ENCODE measurements at regions of chr7 and their contacts with region 1.

Region 1: GRCh38 chr7:16982640-16983350 is 101.0 kb upstream of the AGR3 start:
- DNase-seq: peak in 1 of 2 experiments; percentile 60
- ATAC-seq: 0 out of 6 replicates have a peak, but pooled peaks of 1 of the 2 experiments have one; percentile 27
- H3K4me3 ChIP-seq: no peak overlapping the region
- H3K27ac ChIP-seq: peak overlapping the region; percentile 43 to 49
- H3K4me1 ChIP-seq: peaks cover 29% of the 10 kb centered on the region
- CTCF ChIP-seq: peak; percentile 97
- EP300 ChIP-seq: no peak
- POLR2A ChIP-seq: no peak
- RAD21 ChIP-seq: peak; percentile 96

Region 2: GRCh38 chr7:16770662-16771329 is 212.0 kb before region 1 on chr7:
- CTCF ChIA-PET with region 1: no interaction called
- POLR2A ChIA-PET with region 1: no interaction called
- DNase-seq: no peak
- ATAC-seq: no peak
- H3K4me3 ChIP-seq: no peak overlapping the region
- H3K27ac ChIP-seq: no peak overlapping the region
- H3K4me1 ChIP-seq: no peaks in the 10 kb centered on the region
- CTCF ChIP-seq: no peak
- EP300 ChIP-seq: no peak
- POLR2A ChIP-seq: no peak
- RAD21 ChIP-seq: no peak

Region 3: DNA sequence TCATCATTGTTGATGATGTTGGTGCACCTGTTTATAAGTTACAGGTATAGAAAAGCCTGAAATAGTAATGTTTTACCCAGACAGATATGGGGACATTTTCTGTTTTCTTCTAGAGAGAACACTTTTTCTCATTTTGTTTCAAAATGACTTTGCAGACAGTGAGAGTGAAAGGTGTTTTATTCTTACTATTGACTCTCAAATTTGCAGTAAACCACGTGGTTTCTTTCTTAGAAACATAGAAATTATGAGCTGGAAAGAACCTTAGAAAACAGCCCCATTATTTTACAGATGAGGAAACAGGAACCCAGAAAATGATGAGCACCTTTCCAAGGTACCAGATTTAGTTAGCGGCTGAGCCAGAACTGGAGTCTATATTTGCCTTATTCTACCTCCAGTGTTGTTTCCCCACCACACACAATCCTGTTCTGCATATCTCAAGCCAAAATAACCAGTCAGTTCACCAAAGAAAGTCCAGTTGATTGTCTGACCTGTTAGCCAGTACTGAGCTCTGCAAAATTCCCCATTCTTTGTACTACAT is 176.8 kb after region 1 on chr7:
- CTCF ChIA-PET with region 1: no interaction called
- POLR2A ChIA-PET with region 1: no interaction called
- DNase-seq: no peak
- ATAC-seq: no peak
- H3K4me3 ChIP-seq: no peak overlapping the region
- H3K27ac ChIP-seq: no peak overlapping the region
- H3K4me1 ChIP-seq: no peaks in the 10 kb centered on the region
- CTCF ChIP-seq: no peak
- EP300 ChIP-seq: no peak
- POLR2A ChIP-seq: no peak
- RAD21 ChIP-seq: no peak

Region 4: GRCh38 chr7:17275749-17276671 is 293.2 kb after region 1 on chr7:
- CTCF ChIA-PET with region 1: interaction called, 21 read pairs
- POLR2A ChIA-PET with region 1: no interaction called
- DNase-seq: peak in 1 of 2 experiments; percentile 77
- ATAC-seq: peak; percentile 97 to 99
- H3K4me3 ChIP-seq: no peak overlapping the region
- H3K27ac ChIP-seq: peak overlapping the region; percentile 27 to 65; a peak in 5 of 6 replicates
- H3K4me1 ChIP-seq: peaks cover 20% of the 10 kb centered on the region
- CTCF ChIP-seq: no peak
- EP300 ChIP-seq: peak; percentile 57 to 73; a peak in 2 of 5 replicates
- POLR2A ChIP-seq: no peak
- RAD21 ChIP-seq: peak in 1 of 2 experiments; percentile 3; a peak in 3 of 5 replicates

Region 5: GRCh38 chr7:17646253-17646956 is 663.6 kb after region 1 on chr7:
- CTCF ChIA-PET with region 1: interaction called, 20 read pairs
- POLR2A ChIA-PET with region 1: no interaction called
- DNase-seq: peak in 1 of 2 experiments; percentile 33
- ATAC-seq: peak; percentile 62 to 66; a peak in 5 of 6 replicates
- H3K4me3 ChIP-seq: no peak overlapping the region
- H3K27ac ChIP-seq: peak overlapping the region; percentile 21 to 67; a peak in 5 of 6 replicates
- H3K4me1 ChIP-seq: peaks cover 10% of the 10 kb centered on the region
- CTCF ChIP-seq: peak; percentile 70
- EP300 ChIP-seq: no peak
- POLR2A ChIP-seq: no peak
- RAD21 ChIP-seq: peak; percentile 69 to 88

Measured in A549 (cell line).